Mammary epithelial cell (primary cell): ENCODE measurements at regions of chr1 and their contacts with region 1.

Region 1: GRCh38 chr1:37159102-37159501 is 124.8 kb upstream of the GRIK3 start:
- DNase-seq: no peak
- H3K4me3 ChIP-seq: no peak overlapping the region
- H3K27ac ChIP-seq: no peak overlapping the region
- H3K4me1 ChIP-seq: no peaks in the 10 kb centered on the region
- H3K27me3 ChIP-seq: no peaks in the 10 kb centered on the region
- CTCF ChIP-seq: no peak

Region 2: GRCh38 chr1:37038227-37039076 is 120.7 kb before region 1 on chr1:
- CTCF ChIA-PET with region 1: no interaction called
- dilution Hi-C with region 1: no loop called
- in situ Hi-C with region 1: no loop called
- intact Hi-C with region 1: no loop called
- DNase-seq: peak; percentile 6
- H3K4me3 ChIP-seq: no peak overlapping the region
- H3K27ac ChIP-seq: no peak overlapping the region
- H3K4me1 ChIP-seq: no peaks in the 10 kb centered on the region
- H3K27me3 ChIP-seq: peaks cover 16% of the 10 kb centered on the region
- CTCF ChIP-seq: peak in 1 of 2 donors; percentile 39

Region 3: DNA sequence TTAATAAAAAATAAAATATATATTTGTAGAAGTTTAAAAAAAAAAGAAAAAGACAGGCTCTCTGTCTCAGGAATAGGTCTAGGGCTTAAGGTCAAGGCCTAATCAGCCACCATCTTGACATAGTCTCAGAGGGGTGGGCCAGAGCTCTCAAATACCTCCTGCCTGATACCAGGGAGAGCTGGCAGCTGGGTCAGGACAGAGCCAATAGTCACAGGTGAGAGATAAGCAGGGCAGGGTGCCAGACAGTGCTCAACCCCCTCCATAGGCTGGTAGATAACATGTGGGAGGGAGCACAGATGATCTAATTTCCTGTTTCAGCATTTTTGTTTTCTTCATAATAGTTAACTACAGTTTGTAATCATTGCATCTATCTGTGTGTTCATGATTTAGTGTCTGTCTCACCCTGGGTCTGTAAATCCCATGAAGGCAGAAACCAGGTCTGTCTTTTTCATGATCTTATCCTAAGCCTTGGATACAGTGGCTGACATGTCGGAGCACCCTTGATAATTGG is 27.2 kb after region 1 on chr1:
- CTCF ChIA-PET with region 1: no interaction called
- dilution Hi-C with region 1: loop called (anchors 5 kb)
- in situ Hi-C with region 1: no loop called
- intact Hi-C with region 1: no loop called
- DNase-seq: no peak
- H3K4me3 ChIP-seq: no peak overlapping the region
- H3K27ac ChIP-seq: no peak overlapping the region
- H3K4me1 ChIP-seq: no peaks in the 10 kb centered on the region
- H3K27me3 ChIP-seq: no peaks in the 10 kb centered on the region
- CTCF ChIP-seq: no peak